ENCODE measurements at regions of chr11 and their contacts with region 1.

Region 1: DNA sequence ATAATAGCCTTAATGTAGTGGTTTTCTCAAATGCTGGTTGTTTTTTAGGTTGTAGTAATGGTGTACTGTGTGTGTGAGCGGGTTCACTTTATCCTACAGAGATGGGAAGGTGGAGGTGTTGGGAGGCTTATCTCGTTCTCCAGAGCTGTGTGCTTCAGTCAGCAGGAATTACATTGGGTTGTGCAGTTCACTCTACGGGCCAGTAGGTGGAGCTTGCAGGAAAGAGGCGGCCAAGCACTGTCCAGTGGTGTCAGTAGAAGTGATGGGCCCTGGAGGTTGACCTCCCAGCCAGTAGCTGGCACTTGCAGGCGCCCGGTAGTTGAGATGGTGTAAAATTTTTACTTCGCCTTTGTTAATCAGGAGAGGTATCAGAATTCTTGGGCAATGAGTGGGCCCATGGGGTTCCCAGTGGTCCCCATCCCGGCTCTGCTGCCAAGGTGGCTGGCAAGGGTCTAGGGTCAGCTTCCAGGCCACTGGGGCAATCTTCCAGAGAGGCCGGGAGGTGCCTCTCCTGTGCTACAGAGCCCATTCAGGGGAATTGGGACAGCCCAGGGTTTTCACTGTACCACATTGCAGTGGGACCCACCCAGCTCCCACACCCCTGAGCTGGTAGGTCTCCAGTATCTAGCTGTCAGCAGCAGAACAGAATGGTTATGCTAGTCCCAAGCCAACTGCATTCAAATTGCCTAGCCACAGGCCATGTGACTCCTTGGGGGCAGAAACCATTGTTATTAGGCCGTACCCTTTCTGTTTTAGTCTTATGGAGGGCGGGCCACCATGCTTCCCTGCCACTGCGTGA is 43.9 kb downstream of the BIRC2 start:
- DNase-seq: peak; percentile 71
- H3K4me3 Mint-ChIP-seq: no peak overlapping the region
- H3K27ac Mint-ChIP-seq: peak overlapping the region; percentile 62
- H3K4me1 Mint-ChIP-seq: peaks cover 5% of the 10 kb centered on the region
- H3K27me3 Mint-ChIP-seq: no peaks in the 10 kb centered on the region
- CTCF ChIP-seq: peak; percentile 81

Region 2: DNA sequence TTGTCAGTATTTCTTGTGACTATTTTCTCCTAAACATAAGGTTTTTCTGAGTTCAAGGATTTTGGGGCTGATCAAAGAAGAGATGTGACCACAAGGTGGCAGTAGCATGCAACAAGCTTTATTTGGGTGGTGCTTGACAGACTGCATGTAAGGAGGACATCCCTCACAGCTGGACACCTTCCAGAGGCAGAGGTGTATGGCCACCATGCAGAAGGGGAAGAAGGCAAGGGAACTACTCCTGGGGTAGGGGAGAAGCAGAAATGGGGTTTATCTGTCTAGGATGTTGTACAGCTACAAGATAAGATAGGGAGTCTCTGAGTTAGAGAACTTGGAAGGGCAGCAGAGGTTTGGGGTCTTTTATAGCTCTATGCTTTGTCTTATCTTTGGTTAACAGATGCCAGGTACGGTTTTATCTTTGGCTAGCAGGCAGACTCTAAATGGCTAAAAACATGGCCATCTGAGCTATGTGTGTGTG is 49.0 kb before region 1 on chr11:
- CTCF ChIA-PET with region 1: interaction called, 12 read pairs
- POLR2A ChIA-PET with region 1: no interaction called
- intact Hi-C with region 1: no loop called
- DNase-seq: peak; percentile 91
- H3K4me3 Mint-ChIP-seq: no peak overlapping the region
- H3K27ac Mint-ChIP-seq: no peak overlapping the region
- H3K4me1 Mint-ChIP-seq: peaks cover 40% of the 10 kb centered on the region
- H3K27me3 Mint-ChIP-seq: no peaks in the 10 kb centered on the region
- CTCF ChIP-seq: peak; percentile 67

Region 3: DNA sequence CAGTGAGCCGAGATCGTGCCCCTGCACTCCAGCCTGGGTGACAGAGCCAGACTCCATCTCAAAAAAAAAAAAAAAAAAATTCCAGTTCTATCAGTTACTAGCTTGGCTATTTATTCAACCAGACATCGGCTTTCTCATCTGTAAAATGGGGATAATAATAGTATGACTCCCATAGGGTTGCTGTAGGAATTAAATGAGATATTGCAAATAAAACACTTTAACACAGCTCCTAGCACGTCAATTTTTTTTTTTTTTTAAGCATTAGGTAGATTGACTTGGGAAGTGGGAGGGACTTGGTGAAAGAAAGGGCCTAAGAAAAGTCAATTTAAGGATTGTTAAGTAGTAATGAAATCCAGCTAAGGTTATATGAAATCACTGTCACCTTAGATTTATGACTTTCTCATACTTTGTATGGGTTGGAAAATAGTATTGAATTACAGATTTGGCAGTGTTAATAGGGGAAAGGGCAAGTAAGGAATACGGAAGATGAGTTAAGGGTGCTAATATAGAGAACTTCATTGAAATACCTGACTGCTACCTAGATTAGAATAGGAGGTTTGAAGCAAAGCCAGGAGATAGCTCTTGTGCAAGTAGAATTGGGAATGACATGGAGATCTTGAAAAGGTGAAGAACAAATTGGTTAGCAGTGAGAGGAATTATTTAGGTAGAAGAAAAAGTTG is 15.0 kb before region 1 on chr11:
- CTCF ChIA-PET with region 1: interaction called, 32 read pairs
- POLR2A ChIA-PET with region 1: no interaction called
- intact Hi-C with region 1: no loop called
- DNase-seq: no peak
- H3K4me3 Mint-ChIP-seq: no peak overlapping the region
- H3K27ac Mint-ChIP-seq: no peak overlapping the region
- H3K4me1 Mint-ChIP-seq: peaks cover 7% of the 10 kb centered on the region
- H3K27me3 Mint-ChIP-seq: no peaks in the 10 kb centered on the region
- CTCF ChIP-seq: no peak

Region 4: DNA sequence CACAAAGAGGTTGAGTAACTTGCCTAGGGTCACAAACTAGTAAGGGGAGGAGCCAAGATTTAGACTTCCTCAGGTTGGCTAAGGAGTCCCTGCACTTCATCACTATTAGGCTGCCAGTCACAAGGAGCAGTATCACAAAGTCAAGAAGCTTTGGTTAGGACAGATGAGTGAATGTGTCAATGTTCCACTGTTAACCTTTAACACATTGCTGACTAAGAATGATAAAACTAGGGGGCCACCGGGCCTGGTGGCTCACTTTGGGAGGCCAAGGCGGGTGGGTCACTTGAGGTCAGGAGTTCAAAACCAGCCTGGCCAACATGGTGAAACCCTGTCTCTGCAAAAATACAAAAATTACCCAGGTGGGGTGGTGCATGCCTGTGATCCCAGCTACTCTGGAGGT is 29.7 kb after region 1 on chr11:
- CTCF ChIA-PET with region 1: interaction called, 12 read pairs
- POLR2A ChIA-PET with region 1: interaction called, 3 read pairs
- intact Hi-C with region 1: no loop called
- DNase-seq: no peak
- H3K4me3 Mint-ChIP-seq: no peak overlapping the region
- H3K27ac Mint-ChIP-seq: no peak overlapping the region
- H3K4me1 Mint-ChIP-seq: peaks cover 15% of the 10 kb centered on the region
- H3K27me3 Mint-ChIP-seq: no peaks in the 10 kb centered on the region
- CTCF ChIP-seq: no peak

Region 5: GRCh38 chr11:102488208-102488607 is 97.3 kb after region 1 on chr11:
- CTCF ChIA-PET with region 1: interaction called, 31 read pairs
- POLR2A ChIA-PET with region 1: interaction called, 4 read pairs
- intact Hi-C with region 1: no loop called
- DNase-seq: no peak
- H3K4me3 Mint-ChIP-seq: no peak overlapping the region
- H3K27ac Mint-ChIP-seq: no peak overlapping the region
- H3K4me1 Mint-ChIP-seq: peaks cover 19% of the 10 kb centered on the region
- H3K27me3 Mint-ChIP-seq: no peaks in the 10 kb centered on the region
- CTCF ChIP-seq: no peak

Region 6: GRCh38 chr11:102666331-102666957 is 275.6 kb after region 1 on chr11:
- CTCF ChIA-PET with region 1: interaction called, 36 read pairs
- POLR2A ChIA-PET with region 1: interaction called, 6 read pairs
- intact Hi-C with region 1: loop called (anchors 1 kb)
- DNase-seq: peak; percentile 63
- H3K4me3 Mint-ChIP-seq: no peak overlapping the region
- H3K27ac Mint-ChIP-seq: no peak overlapping the region
- H3K4me1 Mint-ChIP-seq: no peaks in the 10 kb centered on the region
- H3K27me3 Mint-ChIP-seq: no peaks in the 10 kb centered on the region
- CTCF ChIP-seq: peak; percentile 89

Region 7: DNA sequence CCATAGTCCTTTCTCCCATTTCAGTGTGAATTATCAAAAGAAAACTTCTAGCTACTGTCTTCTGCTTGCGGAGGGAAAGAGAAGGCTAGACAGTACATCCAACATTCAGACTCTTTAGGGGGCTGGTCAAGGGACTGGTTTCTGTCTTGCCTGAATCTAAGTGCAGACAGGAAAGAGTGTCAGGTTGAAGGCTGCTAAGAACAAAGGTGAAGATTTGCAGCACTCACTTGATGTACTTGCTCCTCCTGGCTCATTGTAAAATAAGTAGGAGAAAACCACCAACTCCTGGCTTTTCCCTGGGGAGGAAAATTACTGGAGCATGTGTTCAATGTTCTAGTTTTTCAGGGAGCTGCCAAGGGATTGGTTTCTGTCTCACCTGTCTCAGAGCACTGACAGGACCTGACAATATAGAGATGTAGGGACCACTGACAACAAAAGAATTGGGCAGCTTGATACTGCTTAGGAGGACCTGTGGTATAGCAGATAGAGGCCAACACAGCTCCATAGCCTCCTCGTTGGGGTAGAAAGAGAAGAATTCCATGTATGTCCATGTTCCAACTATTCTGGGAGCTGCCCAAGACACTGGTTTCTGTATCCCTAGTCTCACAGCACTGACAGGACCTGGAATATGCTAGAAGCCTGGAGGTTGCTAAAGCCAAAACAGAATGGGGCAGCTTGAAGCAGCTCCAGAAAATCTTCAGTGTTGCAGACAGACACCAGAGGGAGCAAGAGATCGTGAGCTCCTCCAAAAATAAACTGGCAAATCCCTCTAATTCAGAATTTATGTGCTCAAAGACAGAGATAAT is 523.6 kb after region 1 on chr11:
- CTCF ChIA-PET with region 1: no interaction called
- POLR2A ChIA-PET with region 1: no interaction called
- intact Hi-C with region 1: no loop called
- DNase-seq: peak; percentile 54
- H3K4me3 Mint-ChIP-seq: no peak overlapping the region
- H3K27ac Mint-ChIP-seq: no peak overlapping the region
- H3K4me1 Mint-ChIP-seq: peaks cover 20% of the 10 kb centered on the region
- H3K27me3 Mint-ChIP-seq: no peaks in the 10 kb centered on the region
- CTCF ChIP-seq: peak; percentile 61

Measured in MCF 10A (cell line).